Lower lobe of right lung (tissue), 2 donors: ENCODE measurements at regions of chr10 and their contacts with region 1.

Region 1: GRCh38 chr10:103712570-103713498 is 142.5 kb downstream of the SH3PXD2A start:
- DNase-seq: peak; percentile 73
- ATAC-seq: peak; percentile 87 to 88
- H3K4me3 ChIP-seq: no peak overlapping the region
- H3K27ac ChIP-seq: no peak overlapping the region
- H3K4me1 ChIP-seq: no peaks in the 10 kb centered on the region
- H3K27me3 ChIP-seq: no peaks in the 10 kb centered on the region
- CTCF ChIP-seq: peak; percentile 94

Region 2: GRCh38 chr10:103859161-103860086 is 146.6 kb after region 1 on chr10:
- intact Hi-C with region 1: loop called (anchors 5 kb)
- DNase-seq: no peak
- ATAC-seq: peak; percentile 63 to 77
- H3K4me3 ChIP-seq: no peak overlapping the region
- H3K27ac ChIP-seq: no peak overlapping the region
- H3K4me1 ChIP-seq: peaks cover 14% of the 10 kb centered on the region
- H3K27me3 ChIP-seq: no peaks in the 10 kb centered on the region
- CTCF ChIP-seq: peak; percentile 74